Naive thymus-derived CD4-positive, alpha-beta T cell (primary cell): ENCODE measurements at regions of chr1 and their contacts with region 1.

Region 1: DNA sequence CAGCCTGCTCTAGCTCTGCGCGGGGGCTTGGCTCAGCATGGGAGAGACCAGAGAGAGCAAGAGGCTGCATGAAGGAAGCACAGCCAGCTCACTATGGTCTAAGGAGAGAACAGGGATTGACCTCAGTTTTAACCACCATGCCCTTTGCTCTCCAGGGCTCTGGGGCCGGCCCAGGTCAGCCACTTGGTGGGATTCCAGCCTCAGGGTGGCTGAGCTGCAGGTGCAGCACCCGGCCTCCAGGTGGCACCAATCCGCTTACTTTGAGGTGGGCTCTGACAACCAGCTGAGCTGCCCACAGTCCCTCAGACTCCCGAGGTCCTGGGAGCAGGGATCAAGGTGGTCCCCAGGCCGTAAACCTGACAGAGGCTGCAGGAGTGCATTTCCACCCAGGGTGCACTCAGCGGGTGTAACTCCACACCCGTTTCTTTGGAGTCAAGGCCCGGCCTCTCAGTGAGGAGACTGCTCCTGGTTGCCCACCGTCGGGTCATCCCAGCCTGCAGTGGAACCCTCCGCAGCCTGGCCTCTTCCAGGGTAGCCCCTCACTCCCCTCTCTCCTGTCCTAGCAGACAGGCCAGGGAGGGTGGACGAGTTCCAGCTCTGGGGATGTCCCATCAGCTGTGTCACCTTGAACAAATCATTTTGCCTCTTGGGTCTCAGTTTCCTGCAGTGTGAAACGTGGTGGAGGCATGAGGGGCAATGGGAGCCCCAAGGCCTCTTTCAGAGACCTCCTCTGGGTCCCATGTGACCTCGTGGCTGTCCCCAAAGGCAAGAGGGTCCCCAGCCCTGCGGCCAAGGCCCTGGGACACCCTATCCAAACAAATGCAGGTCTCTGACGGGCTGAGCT is 607 bp upstream of the LGR6 start:
- DNase-seq: peak in 8 of 9 donors; percentile 18 to 57 (median 40)
- ATAC-seq: peak; percentile 48
- H3K4me3 ChIP-seq: no peak overlapping the region
- H3K4me3 Mint-ChIP-seq: peak overlapping the region in 3 of 10 donors; percentile 52 to 74 (median 54)
- H3K27ac ChIP-seq: no peak overlapping the region
- H3K27ac Mint-ChIP-seq: no peak overlapping the region
- H3K4me1 ChIP-seq: peaks cover 6 to 8% of the 10 kb centered on the region in 2 donors
- H3K4me1 Mint-ChIP-seq: peaks cover 1 to 16% (median 7%) of the 10 kb centered on the region in 7 donors
- H3K27me3 ChIP-seq: no peaks in the 10 kb centered on the region
- H3K27me3 Mint-ChIP-seq: peaks cover 21 to 42% (median 26%) of the 10 kb centered on the region in 5 donors

Region 2: GRCh38 chr1:202105539-202106276 is 87.3 kb before region 1 on chr1:
- CTCF ChIA-PET with region 1: no interaction called
- POLR2A ChIA-PET with region 1: no interaction called
- intact Hi-C with region 1: no loop called
- DNase-seq: no peak
- ATAC-seq: peak; percentile 91
- H3K4me3 ChIP-seq: no peak overlapping the region
- H3K4me3 Mint-ChIP-seq: no peak overlapping the region
- H3K27ac ChIP-seq: no peak overlapping the region
- H3K27ac Mint-ChIP-seq: no peak overlapping the region
- H3K4me1 ChIP-seq: no peaks in the 10 kb centered on the region
- H3K4me1 Mint-ChIP-seq: no peaks in the 10 kb centered on the region
- H3K27me3 ChIP-seq: no peaks in the 10 kb centered on the region
- H3K27me3 Mint-ChIP-seq: peaks cover 0 to 7% (median 0%) of the 10 kb centered on the region in 5 donors

Region 3: GRCh38 chr1:202235856-202236837 is 43.2 kb after region 1 on chr1:
- CTCF ChIA-PET with region 1: no interaction called
- POLR2A ChIA-PET with region 1: no interaction called
- intact Hi-C with region 1: loop called in 1 of 2 experiments (anchors 2 kb)
- DNase-seq: peak; percentile 11 to 73 (median 45)
- ATAC-seq: peak; percentile 86
- H3K4me3 ChIP-seq: no peak overlapping the region
- H3K4me3 Mint-ChIP-seq: no peak overlapping the region
- H3K27ac ChIP-seq: no peak overlapping the region
- H3K27ac Mint-ChIP-seq: no peak overlapping the region
- H3K4me1 ChIP-seq: no peaks in the 10 kb centered on the region
- H3K4me1 Mint-ChIP-seq: peaks cover 0 to 7% (median 0%) of the 10 kb centered on the region in 7 donors
- H3K27me3 ChIP-seq: no peaks in the 10 kb centered on the region
- H3K27me3 Mint-ChIP-seq: peaks cover 4 to 27% (median 7%) of the 10 kb centered on the region in 5 donors